ENCODE measurements at regions of chr18 and their contacts with region 1.

Region 1: GRCh38 chr18:9614401-9615279 is at the start of gene PPP4R1:
- DNase-seq: no peak
- ATAC-seq: peak; percentile 76
- H3K4me3 ChIP-seq: peak within 1 kb of the TSS; percentile 78 to 87
- H3K27ac ChIP-seq: peak within 1 kb of the TSS; percentile 85
- H3K4me1 ChIP-seq: peaks cover 18 to 41% of the 10 kb centered on the region in 2 experiments
- H3K27me3 ChIP-seq: no peaks in the 10 kb centered on the region
- CTCF ChIP-seq: no peak
- POLR2A ChIP-seq: peak; percentile 43
- RAD21 ChIP-seq: no peak
- total RNA-seq, gene PPP4R1: 66.7 TPM

Region 2: DNA sequence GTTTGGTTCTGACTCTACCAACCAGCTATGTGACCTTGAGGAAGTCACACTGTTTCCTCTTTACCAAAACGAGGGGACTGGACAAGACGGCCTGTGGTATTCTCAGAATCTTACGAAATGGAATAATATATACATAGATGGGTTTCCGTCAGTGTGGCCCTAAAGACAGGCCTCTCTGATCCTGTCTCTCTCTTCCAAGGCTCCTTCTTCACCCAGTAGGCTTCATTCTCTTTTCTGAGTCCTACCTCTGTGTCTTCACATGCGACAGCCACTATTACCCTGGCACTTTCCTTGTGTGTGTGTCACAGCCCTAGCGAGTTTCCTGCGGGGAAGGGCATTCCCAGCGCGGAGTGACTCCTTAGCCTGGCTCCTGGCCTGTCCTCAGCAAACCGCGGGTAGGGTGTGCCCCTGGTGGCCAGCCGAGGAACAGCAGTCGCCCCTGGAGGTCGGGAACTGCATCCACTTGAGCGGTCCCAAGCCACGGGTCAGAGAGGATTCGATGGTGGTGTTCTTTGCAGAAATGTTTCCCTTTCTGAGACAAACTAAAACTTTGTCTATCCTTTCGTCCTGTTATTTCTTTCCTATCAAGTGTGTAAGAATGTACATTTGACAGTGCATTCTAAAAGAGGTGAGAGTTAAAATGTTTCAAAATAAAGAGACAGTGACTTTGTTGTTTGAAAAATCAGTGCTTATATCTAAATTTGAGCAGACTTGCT is 156.8 kb after region 1 on chr18:
- CTCF ChIA-PET with region 1: no interaction called
- POLR2A ChIA-PET with region 1: no interaction called
- RAD21 ChIA-PET with region 1: no interaction called
- intact Hi-C with region 1: loop called (anchors 1 kb)
- DNase-seq: peak; percentile 56
- ATAC-seq: peak; percentile 99
- H3K4me3 ChIP-seq: 0 out of 4 replicates have a peak overlapping the region, but pooled peaks of 1 of the 2 experiments have one; percentile 4
- H3K27ac ChIP-seq: no peak overlapping the region
- H3K4me1 ChIP-seq: peaks cover 0 to 20% of the 10 kb centered on the region in 2 experiments; a peak in 3 of 4 replicates
- H3K27me3 ChIP-seq: no peaks in the 10 kb centered on the region
- CTCF ChIP-seq: peak; percentile 69 to 99 (median 96)
- POLR2A ChIP-seq: no peak
- RAD21 ChIP-seq: peak; percentile 90

Region 3: DNA sequence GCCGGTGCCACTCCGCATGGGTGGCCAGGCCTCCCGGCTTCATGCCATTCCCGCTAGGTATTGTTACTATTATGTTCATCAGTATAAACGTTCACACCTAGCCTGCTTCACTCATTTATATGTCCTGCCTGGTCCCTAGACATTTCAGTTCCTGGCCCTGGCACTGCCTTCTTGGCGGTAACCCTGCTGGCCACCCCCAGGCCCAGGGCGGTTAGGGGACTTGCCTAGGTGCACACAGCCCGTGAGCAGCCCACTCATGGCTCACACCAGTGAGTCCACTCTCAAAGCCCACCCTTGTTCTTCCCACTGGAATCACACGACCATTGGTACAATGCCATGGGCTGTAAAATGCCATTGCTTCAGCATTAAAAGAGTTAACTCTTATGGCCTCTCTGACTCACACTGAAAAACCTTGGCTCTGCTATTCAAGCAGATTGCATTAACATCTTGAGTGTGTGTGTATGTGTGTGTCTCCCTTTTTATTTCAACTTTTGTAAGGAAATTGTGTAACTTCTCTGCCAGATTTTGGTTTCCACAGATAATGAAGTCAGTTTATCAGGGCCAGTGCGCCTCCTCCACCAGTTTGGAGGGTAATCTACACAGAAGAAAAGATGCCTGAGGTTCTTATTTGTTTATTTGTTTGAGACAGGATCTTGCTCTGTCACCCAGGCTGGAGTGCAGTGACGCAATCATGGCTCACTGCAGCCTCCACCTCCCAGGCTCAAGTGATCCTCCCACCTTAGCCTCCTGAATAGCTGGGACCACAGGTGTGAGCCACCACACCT is 167.6 kb after region 1 on chr18:
- CTCF ChIA-PET with region 1: no interaction called
- POLR2A ChIA-PET with region 1: no interaction called
- RAD21 ChIA-PET with region 1: no interaction called
- intact Hi-C with region 1: no loop called
- DNase-seq: no peak
- ATAC-seq: peak; percentile 76
- H3K4me3 ChIP-seq: peak overlapping the region in 1 of 2 experiments; percentile 29; a peak in 1 of 4 replicates
- H3K27ac ChIP-seq: 0 out of 2 replicates have a peak overlapping the region, but pooled peaks have one; percentile 1
- H3K4me1 ChIP-seq: peaks cover 35 to 37% of the 10 kb centered on the region in 2 experiments
- H3K27me3 ChIP-seq: no peaks in the 10 kb centered on the region
- CTCF ChIP-seq: no peak
- POLR2A ChIP-seq: no peak
- RAD21 ChIP-seq: no peak; the same call in 1 of the 2 replicates